ENCODE measurements at regions of chr9 and their contacts with region 1.

Region 1: GRCh38 chr9:70778568-70778967 is 342.9 kb downstream of the TRPM3 start:
- DNase-seq: no peak
- H3K4me3 ChIP-seq: no peak overlapping the region
- H3K27ac ChIP-seq: no peak overlapping the region
- H3K4me1 ChIP-seq: no peaks in the 10 kb centered on the region
- H3K27me3 ChIP-seq: no peaks in the 10 kb centered on the region
- CTCF ChIP-seq: no peak
- POLR2A ChIP-seq: no peak

Region 2: GRCh38 chr9:69891696-69892095 is 886.9 kb before region 1 on chr9:
- intact Hi-C with region 1: loop called (anchors 5 kb)
- DNase-seq: no peak
- H3K4me3 ChIP-seq: no peak overlapping the region
- H3K27ac ChIP-seq: no peak overlapping the region
- H3K4me1 ChIP-seq: no peaks in the 10 kb centered on the region
- H3K27me3 ChIP-seq: no peaks in the 10 kb centered on the region
- CTCF ChIP-seq: no peak
- POLR2A ChIP-seq: no peak

Region 3: GRCh38 chr9:70924380-70924779 is 145.8 kb after region 1 on chr9:
- intact Hi-C with region 1: no loop called
- DNase-seq: no peak
- H3K4me3 ChIP-seq: peak overlapping the region in 2 of 3 donors; percentile 24 to 54
- H3K27ac ChIP-seq: peak overlapping the region in 1 of 2 donors; percentile 22
- H3K4me1 ChIP-seq: no peaks in the 10 kb centered on the region
- H3K27me3 ChIP-seq: no peaks in the 10 kb centered on the region
- CTCF ChIP-seq: no peak
- POLR2A ChIP-seq: no peak